ENCODE measurements at regions of chr12 and their contacts with region 1.

Region 1: GRCh38 chr12:121399391-121400331 is at the start of gene RNF34:
- DNase-seq: peak; percentile 95 to 100 (median 98)

Region 2: DNA sequence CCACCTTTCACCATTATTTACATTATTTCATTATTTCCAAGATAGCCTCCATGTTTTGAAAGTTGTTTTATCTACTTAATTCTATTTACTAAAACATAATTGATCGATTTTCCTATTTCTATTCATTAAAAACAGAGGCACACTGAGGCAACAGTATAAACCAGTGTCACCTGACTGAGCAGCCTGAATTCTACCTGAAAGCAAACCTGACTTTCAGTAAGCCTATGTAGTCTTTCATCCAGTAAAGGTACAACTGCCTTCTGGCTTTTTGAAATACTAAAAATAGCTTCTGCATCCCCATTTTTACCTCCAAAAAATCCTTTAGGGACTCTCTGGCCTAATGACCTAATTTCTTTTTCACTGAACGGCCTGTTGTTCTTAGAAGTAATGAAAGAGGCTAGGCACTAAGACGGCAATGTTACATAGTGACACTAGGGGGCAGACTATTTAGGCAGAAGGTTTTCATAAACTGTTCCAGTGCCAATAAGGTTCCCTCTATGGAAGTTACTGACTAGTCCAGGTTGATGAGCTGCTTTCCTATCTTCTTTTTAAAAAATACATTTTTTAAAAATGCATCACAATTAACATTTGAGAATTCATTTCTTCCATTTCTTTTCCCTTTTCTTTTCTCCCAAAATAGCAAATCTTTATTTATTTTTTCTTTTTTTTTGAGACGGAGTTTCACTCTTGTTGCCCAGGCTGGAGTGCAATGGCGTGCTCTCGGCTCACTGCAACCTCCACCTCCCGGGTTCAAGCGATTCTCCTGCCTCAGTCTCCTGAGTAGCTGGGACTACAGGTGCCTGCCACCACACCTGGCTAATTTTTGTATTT is 64.9 kb before region 1 on chr12:
- intact Hi-C with region 1: loop called (anchors 5 kb)
- DNase-seq: peak in 1 of 10 donors; percentile 13

Region 3: DNA sequence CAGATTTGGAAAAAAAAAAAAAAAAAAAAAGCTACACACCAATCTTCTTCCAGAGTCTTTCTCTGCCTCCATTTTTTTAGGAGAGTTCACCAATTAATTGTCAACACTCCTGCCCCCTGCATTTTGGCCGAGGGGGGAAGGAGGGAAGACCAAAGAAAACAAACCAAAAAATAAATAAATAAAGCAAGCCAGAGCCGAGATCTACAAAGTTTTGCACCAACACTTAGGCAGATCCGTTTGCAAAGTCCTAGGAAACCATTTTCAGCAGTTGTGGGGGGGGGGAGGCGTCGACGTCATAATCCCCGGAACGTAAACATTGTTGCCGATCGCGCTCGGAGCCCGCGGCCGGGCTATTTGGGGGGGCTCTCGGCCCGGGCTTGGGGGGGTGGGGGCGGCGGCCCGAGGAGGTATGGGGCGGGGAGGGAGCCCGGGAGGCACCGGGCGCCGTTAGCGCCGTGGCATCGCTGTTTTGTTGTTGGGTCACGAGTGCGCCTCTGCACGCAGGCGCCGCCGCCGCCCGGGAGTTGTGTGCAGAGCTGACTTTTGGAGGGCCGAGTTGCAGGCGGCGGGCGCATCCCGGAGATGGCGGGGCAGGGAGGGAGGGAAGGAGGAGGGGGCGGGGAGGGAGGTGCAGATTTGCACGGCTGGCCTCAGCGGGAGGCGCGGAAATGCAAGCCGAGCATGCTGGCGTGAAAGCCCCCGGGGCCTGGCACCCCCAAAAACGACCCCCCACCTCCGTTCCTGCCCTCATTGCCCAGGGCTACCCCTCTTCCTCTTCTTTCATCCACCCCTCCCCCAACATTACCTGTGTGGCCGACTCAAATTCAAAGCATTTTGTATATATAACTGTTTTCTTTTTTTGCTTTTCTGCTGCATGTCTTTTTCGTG is 180.6 kb after region 1 on chr12:
- intact Hi-C with region 1: no loop called
- DNase-seq: peak; percentile 61 to 96 (median 76)

Measured in posterior cingulate gyrus (tissue), 11 donors.